Tibial artery (tissue), 4 donors: ENCODE measurements at regions of chr12 and their contacts with region 1.

Region 1: GRCh38 chr12:47742253-47742825 is 16.3 kb downstream of the RAPGEF3 start:
- DNase-seq: peak in 1 of 2 donors; percentile 47
- H3K4me3 ChIP-seq: no peak overlapping the region
- H3K27ac ChIP-seq: no peak overlapping the region
- H3K4me1 ChIP-seq: peaks cover 7 to 27% (median 22%) of the 10 kb centered on the region in 4 donors
- H3K27me3 ChIP-seq: no peaks in the 10 kb centered on the region
- CTCF ChIP-seq: peak; percentile 96 to 98

Region 2: GRCh38 chr12:47779301-47779942 is 37.1 kb after region 1 on chr12:
- intact Hi-C with region 1: loop called (anchors 5 kb)
- DNase-seq: peak; percentile 92 to 93
- H3K4me3 ChIP-seq: no peak overlapping the region
- H3K27ac ChIP-seq: peak overlapping the region; percentile 38 to 87
- H3K4me1 ChIP-seq: peaks cover 0 to 55% (median 53%) of the 10 kb centered on the region in 4 donors
- H3K27me3 ChIP-seq: no peaks in the 10 kb centered on the region
- CTCF ChIP-seq: peak; percentile 92 to 96

Region 3: GRCh38 chr12:49043856-49044258 is 1301.5 kb after region 1 on chr12:
- intact Hi-C with region 1: no loop called
- DNase-seq: no peak
- H3K4me3 ChIP-seq: no peak overlapping the region
- H3K27ac ChIP-seq: no peak overlapping the region
- H3K4me1 ChIP-seq: no peaks in the 10 kb centered on the region
- H3K27me3 ChIP-seq: no peaks in the 10 kb centered on the region
- CTCF ChIP-seq: peak; percentile 42 to 62